A549 (cell line): ENCODE measurements at regions of chr22 and their contacts with region 1.

Region 1: DNA sequence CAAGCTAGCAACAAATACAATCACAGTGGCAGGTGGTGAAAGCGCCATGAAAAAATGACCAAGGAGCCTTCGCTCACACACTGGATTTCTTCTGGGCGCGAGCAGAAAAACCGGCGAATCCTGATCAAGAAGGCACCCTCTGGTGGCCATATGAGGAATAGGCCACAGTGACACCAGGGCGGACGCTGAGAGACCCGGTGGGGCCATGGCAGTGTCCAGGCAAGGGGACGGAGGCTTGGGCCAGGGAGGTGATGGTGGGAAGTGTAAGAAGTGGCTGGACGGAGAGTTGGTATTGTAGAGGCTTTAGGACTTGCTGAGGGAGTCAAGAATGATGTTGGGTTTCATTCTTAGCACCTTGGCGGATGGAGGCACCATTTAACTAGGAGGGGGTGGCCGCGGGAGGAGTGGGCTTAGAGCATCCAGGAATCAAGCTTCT is 16.9 kb upstream of the RAC2 start:
- DNase-seq: peak; percentile 53 to 58
- ATAC-seq: peak; percentile 78 to 81; a peak in 5 of 6 replicates
- H3K4me3 ChIP-seq: no peak overlapping the region
- H3K27ac ChIP-seq: no peak overlapping the region
- H3K4me1 ChIP-seq: peaks cover 19% of the 10 kb centered on the region
- CTCF ChIP-seq: peak; percentile 61
- EP300 ChIP-seq: no peak
- POLR2A ChIP-seq: no peak
- RAD21 ChIP-seq: peak; percentile 47

Region 2: DNA sequence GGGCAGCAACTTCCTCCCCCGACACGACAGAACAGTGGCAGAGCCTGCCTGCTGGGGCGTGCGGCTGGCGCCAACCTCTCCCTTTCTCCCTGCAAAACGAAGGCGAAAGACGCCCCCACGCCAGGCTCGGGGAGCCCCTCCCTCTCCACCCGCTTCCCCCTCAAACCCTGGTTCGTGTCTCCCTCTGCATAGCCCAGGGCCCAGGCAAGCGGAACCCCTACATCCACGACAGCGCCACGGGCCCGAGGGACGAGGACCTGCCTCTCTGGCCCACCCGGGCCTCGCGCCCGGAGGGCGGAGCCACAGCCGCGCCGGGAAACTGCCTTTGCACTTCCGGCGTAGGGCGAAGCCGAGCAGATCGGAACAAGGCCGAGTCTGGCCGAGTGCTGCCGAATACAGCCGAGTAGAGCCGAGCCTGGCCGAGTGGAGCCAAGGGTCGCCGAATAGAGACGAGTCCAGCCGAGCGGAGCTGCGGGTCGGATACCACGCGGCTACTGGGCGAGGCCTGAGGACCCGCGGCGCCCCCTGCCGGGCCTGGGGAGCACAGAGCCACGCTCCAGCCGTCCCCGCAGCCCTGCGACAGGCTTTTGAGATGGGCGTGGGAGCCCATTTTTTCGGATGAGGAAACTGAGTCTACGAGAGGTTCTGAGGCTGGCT is 61.7 kb before region 1 on chr22:
- CTCF ChIA-PET with region 1: interaction called, 33 read pairs
- POLR2A ChIA-PET with region 1: interaction called, 4 read pairs
- DNase-seq: peak; percentile 74 to 97
- ATAC-seq: peak; percentile 49 to 86
- H3K4me3 ChIP-seq: peak overlapping the region; percentile 69
- H3K27ac ChIP-seq: peak overlapping the region; percentile 99 to 100
- H3K4me1 ChIP-seq: peaks cover 52% of the 10 kb centered on the region
- CTCF ChIP-seq: peak; percentile 78
- EP300 ChIP-seq: no peak
- POLR2A ChIP-seq: peak; percentile 73
- RAD21 ChIP-seq: peak; percentile 57 to 76

Region 3: GRCh38 chr22:37229805-37230672 is 30.9 kb before region 1 on chr22:
- CTCF ChIA-PET with region 1: interaction called, 30 read pairs
- POLR2A ChIA-PET with region 1: no interaction called
- DNase-seq: no peak
- ATAC-seq: peak in 1 of 2 experiments; percentile 6; a peak in 1 of 6 replicates
- H3K4me3 ChIP-seq: no peak overlapping the region
- H3K27ac ChIP-seq: peak overlapping the region in 1 of 2 experiments; percentile 81; a peak in 3 of 6 replicates
- H3K4me1 ChIP-seq: peaks cover 26% of the 10 kb centered on the region
- CTCF ChIP-seq: no peak
- EP300 ChIP-seq: no peak
- POLR2A ChIP-seq: no peak
- RAD21 ChIP-seq: no peak

Region 4: DNA sequence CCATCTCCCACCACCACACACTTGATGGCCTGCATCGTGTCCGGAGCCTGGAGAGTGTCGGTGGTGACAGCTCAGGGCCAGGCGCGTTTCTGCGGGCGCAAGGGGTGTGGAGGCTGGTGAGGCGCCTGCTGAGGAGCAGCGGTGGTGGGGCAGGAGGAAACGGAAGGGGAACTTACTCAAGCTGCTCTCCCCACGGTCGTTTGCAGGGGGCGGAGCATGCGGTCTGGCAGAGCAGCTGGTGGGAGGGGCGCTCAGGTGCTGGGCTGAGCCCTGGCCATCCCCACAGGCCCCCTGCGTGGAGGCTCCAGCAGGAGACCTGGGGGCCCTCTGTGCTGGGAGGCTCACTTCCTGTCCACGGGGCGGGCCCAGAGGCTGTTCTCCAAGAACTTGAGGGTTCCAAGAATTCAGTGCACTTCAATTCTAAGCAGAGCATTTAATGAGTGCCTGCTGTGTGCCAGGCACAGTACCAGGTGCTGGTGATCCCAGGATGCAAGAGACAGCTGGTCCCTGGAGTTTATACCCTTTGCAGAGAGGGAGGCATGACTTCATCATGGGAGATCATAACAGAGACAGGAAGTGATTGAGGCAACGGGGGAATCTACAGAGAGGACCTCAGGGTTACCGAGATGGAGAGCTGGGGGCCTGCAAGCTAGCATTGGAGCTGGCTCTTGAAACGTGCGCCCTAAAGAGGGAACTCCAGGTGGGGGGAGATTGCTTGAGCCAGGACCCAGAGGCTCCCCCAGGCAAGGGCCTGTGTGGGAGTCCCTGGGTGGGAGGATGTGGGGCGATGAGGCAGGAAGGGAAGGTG is 16.6 kb before region 1 on chr22 and contains the start of gene RAC2:
- CTCF ChIA-PET with region 1: interaction called, 42 read pairs
- POLR2A ChIA-PET with region 1: no interaction called
- DNase-seq: no peak
- ATAC-seq: no peak
- H3K4me3 ChIP-seq: no peak within 1 kb of the TSS
- H3K27ac ChIP-seq: no peak within 1 kb of the TSS
- H3K4me1 ChIP-seq: peaks cover 3% of the 10 kb centered on the region; the same call in 1 of the 3 replicates
- CTCF ChIP-seq: no peak
- EP300 ChIP-seq: no peak
- POLR2A ChIP-seq: no peak
- RAD21 ChIP-seq: no peak
- polyA plus RNA-seq, gene RAC2: 0.12 TPM in 1 of 2 replicates, not detected in the other

Region 5: DNA sequence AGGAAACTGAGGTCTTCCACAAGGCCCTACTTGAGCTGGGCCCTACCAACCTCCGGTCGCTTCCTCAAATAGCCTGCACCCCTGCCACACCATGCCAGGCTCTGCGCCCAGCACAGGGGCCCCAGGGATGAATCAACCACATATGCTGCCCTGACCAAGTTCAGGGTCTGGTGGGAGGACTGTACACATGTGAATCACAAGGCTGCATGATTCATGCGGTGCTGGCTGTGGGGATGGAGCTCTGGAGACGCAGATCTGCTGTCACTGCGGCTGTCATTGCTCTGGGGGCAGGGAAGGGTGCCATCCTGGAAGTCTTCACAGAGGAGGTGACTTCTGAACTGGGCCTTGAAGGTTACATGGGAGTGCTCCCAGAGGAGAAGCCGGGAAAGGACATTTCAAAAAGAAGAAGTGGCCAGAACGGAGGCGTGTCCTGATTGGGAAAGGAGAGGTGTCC is 42.9 kb after region 1 on chr22:
- CTCF ChIA-PET with region 1: interaction called, 27 read pairs
- POLR2A ChIA-PET with region 1: no interaction called
- DNase-seq: peak; percentile 67 to 82
- ATAC-seq: peak; percentile 80 to 83
- H3K4me3 ChIP-seq: no peak overlapping the region
- H3K27ac ChIP-seq: peak overlapping the region; percentile 79 to 93
- H3K4me1 ChIP-seq: peaks cover 56% of the 10 kb centered on the region
- CTCF ChIP-seq: no peak
- EP300 ChIP-seq: no peak
- POLR2A ChIP-seq: no peak
- RAD21 ChIP-seq: no peak

Region 6: GRCh38 chr22:37316875-37317371 is 56.0 kb after region 1 on chr22:
- CTCF ChIA-PET with region 1: interaction called, 27 read pairs
- POLR2A ChIA-PET with region 1: no interaction called
- DNase-seq: peak; percentile 84 to 87
- ATAC-seq: peak; percentile 79 to 95
- H3K4me3 ChIP-seq: no peak overlapping the region
- H3K27ac ChIP-seq: peak overlapping the region; percentile 33 to 85
- H3K4me1 ChIP-seq: peaks cover 55% of the 10 kb centered on the region
- CTCF ChIP-seq: peak; percentile 71
- EP300 ChIP-seq: no peak
- POLR2A ChIP-seq: no peak
- RAD21 ChIP-seq: peak; percentile 96

Region 7: GRCh38 chr22:37457093-37457893 is 196.4 kb after region 1 on chr22:
- CTCF ChIA-PET with region 1: interaction called, 42 read pairs
- POLR2A ChIA-PET with region 1: no interaction called
- DNase-seq: peak; percentile 67 to 70
- ATAC-seq: peak; percentile 81 to 90
- H3K4me3 ChIP-seq: no peak overlapping the region
- H3K27ac ChIP-seq: peak overlapping the region; percentile 91 to 99
- H3K4me1 ChIP-seq: peaks cover 33% of the 10 kb centered on the region
- CTCF ChIP-seq: peak; percentile 87
- EP300 ChIP-seq: no peak
- POLR2A ChIP-seq: no peak
- RAD21 ChIP-seq: peak; percentile 96 to 99